ENCODE measurements at regions of chr19 and their contacts with region 1.

Region 1: GRCh38 chr19:18521885-18522624 is at the start of gene ELL:
- DNase-seq: peak; percentile 99
- ATAC-seq: peak; percentile 89
- H3K4me3 ChIP-seq: peak within 1 kb of the TSS; percentile 92 to 94
- H3K27ac ChIP-seq: peak within 1 kb of the TSS; percentile 95
- H3K4me1 ChIP-seq: peaks cover 14 to 33% of the 10 kb centered on the region in 2 experiments
- H3K27me3 ChIP-seq: no peaks in the 10 kb centered on the region
- CTCF ChIP-seq: no peak
- POLR2A ChIP-seq: peak; percentile 68
- RAD21 ChIP-seq: no peak
- total RNA-seq, gene ELL: 22.9 TPM

Region 2: GRCh38 chr19:18488838-18489626 is 33.0 kb before region 1 on chr19:
- CTCF ChIA-PET with region 1: interaction called, 12 read pairs
- POLR2A ChIA-PET with region 1: interaction called, 3 read pairs
- RAD21 ChIA-PET with region 1: no interaction called
- intact Hi-C with region 1: no loop called
- DNase-seq: no peak
- ATAC-seq: peak; percentile 65
- H3K4me3 ChIP-seq: no peak overlapping the region
- H3K27ac ChIP-seq: no peak overlapping the region
- H3K4me1 ChIP-seq: peaks cover 23 to 37% of the 10 kb centered on the region in 2 experiments
- H3K27me3 ChIP-seq: no peaks in the 10 kb centered on the region
- CTCF ChIP-seq: peak; percentile 15 to 61 (median 48); a peak in 4 of 6 replicates
- POLR2A ChIP-seq: no peak
- RAD21 ChIP-seq: peak; percentile 48; the same call in 1 of the 2 replicates

Region 3: GRCh38 chr19:18557474-18558201 is 35.6 kb after region 1 on chr19 and contains the start of gene KXD1:
- CTCF ChIA-PET with region 1: no interaction called
- POLR2A ChIA-PET with region 1: interaction called, 13 read pairs
- RAD21 ChIA-PET with region 1: interaction called in 1 of 2 experiments, 4 read pairs
- intact Hi-C with region 1: loop called (anchors 1 kb)
- DNase-seq: peak; percentile 99
- ATAC-seq: peak; percentile 97
- H3K4me3 ChIP-seq: peak within 1 kb of the TSS; percentile 89 to 100
- H3K27ac ChIP-seq: peak within 1 kb of the TSS; percentile 79
- H3K4me1 ChIP-seq: peaks cover 4 to 22% of the 10 kb centered on the region in 2 experiments; a peak in 3 of 4 replicates
- H3K27me3 ChIP-seq: no peaks in the 10 kb centered on the region
- CTCF ChIP-seq: no peak
- POLR2A ChIP-seq: peak; percentile 55
- RAD21 ChIP-seq: no peak
- total RNA-seq, gene KXD1: 139 TPM

Region 4: GRCh38 chr19:18571564-18572300 is 49.7 kb after region 1 on chr19 and contains the start of gene UBA52:
- CTCF ChIA-PET with region 1: interaction called, 9 read pairs
- POLR2A ChIA-PET with region 1: interaction called, 15 read pairs
- RAD21 ChIA-PET with region 1: no interaction called
- intact Hi-C with region 1: loop called (anchors 2 kb)
- DNase-seq: peak; percentile 96
- ATAC-seq: peak; percentile 92
- H3K4me3 ChIP-seq: peak within 1 kb of the TSS; percentile 100
- H3K27ac ChIP-seq: peak within 1 kb of the TSS; percentile 94
- H3K4me1 ChIP-seq: peaks cover 12 to 28% of the 10 kb centered on the region in 2 experiments
- H3K27me3 ChIP-seq: no peaks in the 10 kb centered on the region
- CTCF ChIP-seq: no peak
- POLR2A ChIP-seq: peak; percentile 90
- RAD21 ChIP-seq: peak; percentile 18; the same call in 1 of the 2 replicates
- total RNA-seq, gene UBA52: 1,743 TPM

Region 5: GRCh38 chr19:18636183-18636968 is 114.3 kb after region 1 on chr19:
- CTCF ChIA-PET with region 1: no interaction called
- POLR2A ChIA-PET with region 1: no interaction called
- RAD21 ChIA-PET with region 1: no interaction called
- intact Hi-C with region 1: loop called (anchors 2 kb)
- DNase-seq: peak; percentile 87
- ATAC-seq: peak; percentile 89
- H3K4me3 ChIP-seq: peak overlapping the region; percentile 92 to 98
- H3K27ac ChIP-seq: peak overlapping the region; percentile 78
- H3K4me1 ChIP-seq: peaks cover 9 to 27% of the 10 kb centered on the region in 2 experiments
- H3K27me3 ChIP-seq: no peaks in the 10 kb centered on the region
- CTCF ChIP-seq: no peak
- POLR2A ChIP-seq: no peak
- RAD21 ChIP-seq: no peak